Activated T-helper 1 cell treated with anti-CD3 and anti-CD28 coated beads, Interleukin-12 subunit alpha, Interleukin-12 subunit beta, Interleukin-2, Interleukin-4 antibody, amounts not matched to agents 30 ng/mL and 10 ng/mL and 1 ng/mL, durations not matched to agents 14 hours and 24 hours and 36 hours (primary cell): ENCODE measurements at regions of chr7 and their contacts with region 1.

Region 1: DNA sequence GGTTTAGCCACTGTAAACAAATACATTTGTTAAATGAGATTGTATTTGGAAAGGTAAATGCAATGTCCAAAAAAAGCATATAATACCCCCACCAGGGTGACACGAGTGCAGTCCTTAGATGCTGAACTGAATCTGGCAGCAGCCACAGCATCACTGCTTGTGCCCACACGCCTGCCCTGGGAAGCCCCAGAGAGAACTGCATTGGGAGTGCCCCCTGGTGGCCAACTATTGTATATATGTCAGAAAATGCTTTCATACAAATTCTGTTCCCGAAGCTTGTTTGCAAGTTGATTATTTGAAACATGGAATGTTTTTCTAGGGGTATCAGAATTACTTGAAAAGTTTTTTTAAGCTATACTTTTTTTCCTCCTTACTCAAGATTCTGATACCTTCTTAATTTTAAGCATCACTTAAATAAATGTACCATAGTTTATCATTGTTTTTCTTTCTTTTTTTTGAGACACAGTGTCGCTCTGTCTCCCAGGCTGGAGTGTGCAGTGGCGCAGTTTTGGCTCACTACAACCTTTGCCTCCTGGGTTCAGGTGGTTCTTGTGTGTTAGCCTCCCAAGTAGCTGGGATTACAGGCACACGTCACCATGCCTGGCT is 50.1 kb downstream of the LANCL2 start:
- DNase-seq: peak; percentile 65
- H3K4me3 Mint-ChIP-seq: no peak overlapping the region
- H3K27ac Mint-ChIP-seq: peak overlapping the region; percentile 20
- H3K4me1 Mint-ChIP-seq: peaks cover 4% of the 10 kb centered on the region
- H3K27me3 Mint-ChIP-seq: no peaks in the 10 kb centered on the region

Region 2: DNA sequence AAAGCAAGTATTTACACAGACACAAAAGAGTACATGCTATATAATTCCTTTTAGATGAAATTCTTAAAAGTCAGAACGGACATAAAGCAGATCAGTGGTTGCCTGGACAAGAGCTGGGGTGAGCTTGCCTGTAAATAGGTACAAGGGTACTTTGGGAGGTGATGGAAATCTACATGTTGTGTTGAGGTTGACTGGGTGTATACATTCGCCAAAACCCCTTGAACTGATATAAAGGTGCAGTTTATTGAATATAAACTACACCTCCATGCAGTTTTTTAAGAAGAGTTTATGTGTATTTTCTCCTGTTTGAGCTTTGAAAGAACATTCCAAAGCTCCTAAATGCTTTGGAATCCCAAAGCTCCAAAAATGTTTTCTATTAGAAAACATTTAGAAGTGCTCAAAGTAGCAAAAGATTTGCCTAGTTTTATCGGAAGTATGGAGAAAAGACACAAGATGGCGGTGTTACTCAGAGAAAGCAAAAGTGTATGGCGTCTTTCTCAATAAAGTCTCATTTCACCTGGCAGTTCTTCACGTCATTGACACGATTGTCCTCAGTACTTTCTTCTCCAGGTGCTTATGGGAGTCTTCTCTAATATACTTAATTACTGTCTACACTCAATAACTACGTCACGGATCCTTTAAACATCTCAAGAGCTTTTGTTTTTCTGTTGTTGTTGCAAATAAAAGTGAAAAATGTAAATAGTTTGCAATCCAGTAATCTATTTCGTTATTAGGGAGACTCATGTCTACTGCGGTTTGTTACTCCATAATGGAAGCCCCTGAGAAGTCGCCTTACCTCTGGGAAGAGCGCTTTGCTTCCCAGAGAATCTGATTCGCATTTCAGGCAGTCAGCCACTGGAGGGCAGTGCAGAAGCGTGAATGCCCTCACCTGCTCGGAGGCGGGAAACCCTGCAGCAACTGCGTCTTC is 641.5 kb before region 1 on chr7:
- intact Hi-C with region 1: loop called (anchors 1 kb)
- DNase-seq: peak; percentile 53
- H3K4me3 Mint-ChIP-seq: peak overlapping the region; percentile 70
- H3K27ac Mint-ChIP-seq: no peak overlapping the region
- H3K4me1 Mint-ChIP-seq: peaks cover 12% of the 10 kb centered on the region
- H3K27me3 Mint-ChIP-seq: peaks cover 27% of the 10 kb centered on the region

Region 3: DNA sequence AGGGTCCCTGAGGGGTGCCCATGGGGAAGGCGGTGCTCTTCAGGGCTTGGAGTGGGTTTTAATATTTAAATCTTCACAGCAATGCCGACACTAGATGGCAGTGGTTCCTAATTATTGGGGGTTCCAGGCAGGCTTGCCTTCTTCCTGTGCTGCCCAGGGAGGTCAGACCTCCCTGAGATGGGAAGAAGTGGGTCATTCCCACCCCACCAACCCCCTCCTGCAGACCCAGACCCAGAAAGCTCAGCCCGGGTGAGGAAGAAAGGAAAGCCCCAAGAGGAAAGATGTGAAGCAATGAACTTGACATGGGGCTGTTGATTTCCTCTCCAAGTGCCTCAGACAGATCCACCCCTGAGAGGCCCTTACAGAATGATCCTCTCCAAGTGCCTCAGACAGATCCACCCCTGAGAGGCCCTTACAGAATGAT is 135.2 kb before region 1 on chr7:
- intact Hi-C with region 1: loop called (anchors 1 kb)
- DNase-seq: peak; percentile 29
- H3K4me3 Mint-ChIP-seq: no peak overlapping the region
- H3K27ac Mint-ChIP-seq: no peak overlapping the region
- H3K4me1 Mint-ChIP-seq: peaks cover 5% of the 10 kb centered on the region
- H3K27me3 Mint-ChIP-seq: peaks cover 5% of the 10 kb centered on the region

Region 4: GRCh38 chr7:55326081-55326835 is 89.0 kb before region 1 on chr7:
- intact Hi-C with region 1: no loop called
- DNase-seq: no peak
- H3K4me3 Mint-ChIP-seq: no peak overlapping the region
- H3K27ac Mint-ChIP-seq: no peak overlapping the region
- H3K4me1 Mint-ChIP-seq: no peaks in the 10 kb centered on the region
- H3K27me3 Mint-ChIP-seq: peaks cover 12% of the 10 kb centered on the region